ENCODE measurements at regions of chr15 and their contacts with region 1.

Region 1: GRCh38 chr15:57611938-57612337 is 20.2 kb downstream of the MYZAP start:
- DNase-seq: no peak
- H3K4me3 ChIP-seq: no peak overlapping the region
- H3K27ac ChIP-seq: no peak overlapping the region
- H3K4me1 ChIP-seq: no peaks in the 10 kb centered on the region; a peak in 2 of 7 replicates
- H3K27me3 ChIP-seq: peaks cover 0 to 2% (median 0%) of the 10 kb centered on the region in 4 experiments; a peak in 1 of 7 replicates
- CTCF ChIP-seq: peak; percentile 28 to 61 (median 40)
- EP300 ChIP-seq: no peak
- POLR2A ChIP-seq: no peak
- RAD21 ChIP-seq: peak; percentile 53 to 66

Region 2: DNA sequence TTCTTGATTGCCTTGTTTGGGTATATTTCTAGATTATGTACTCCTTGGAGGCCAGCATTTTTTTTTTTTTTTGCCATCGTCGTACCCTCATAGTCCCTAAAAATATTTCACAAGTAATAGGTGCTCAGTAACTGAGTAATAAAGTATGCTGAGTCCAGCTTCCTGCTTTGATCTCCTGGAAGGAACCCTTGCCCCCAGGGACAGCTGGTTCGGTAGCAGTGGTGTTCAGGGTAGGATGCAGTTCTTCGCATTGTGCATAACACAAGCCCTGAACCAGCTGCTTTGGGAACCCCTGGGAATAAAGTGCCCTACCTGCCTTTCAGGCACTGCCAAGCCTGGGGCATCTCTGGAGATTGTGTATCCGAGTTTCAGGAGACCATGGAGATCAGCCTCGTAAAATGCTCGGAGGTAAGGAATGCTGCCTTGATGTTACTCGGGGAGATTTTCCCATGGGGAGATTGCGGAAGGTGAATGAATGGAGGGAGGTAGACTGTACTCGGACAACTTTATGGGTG is 12.6 kb before region 1 on chr15:
- CTCF ChIA-PET with region 1: interaction called, 27 read pairs
- POLR2A ChIA-PET with region 1: no interaction called
- DNase-seq: no peak
- H3K4me3 ChIP-seq: no peak overlapping the region
- H3K27ac ChIP-seq: no peak overlapping the region
- H3K4me1 ChIP-seq: peaks cover 0 to 5% (median 1%) of the 10 kb centered on the region in 4 experiments; a peak in 3 of 7 replicates
- H3K27me3 ChIP-seq: no peaks in the 10 kb centered on the region
- CTCF ChIP-seq: no peak
- EP300 ChIP-seq: no peak
- POLR2A ChIP-seq: no peak
- RAD21 ChIP-seq: no peak

Region 3: DNA sequence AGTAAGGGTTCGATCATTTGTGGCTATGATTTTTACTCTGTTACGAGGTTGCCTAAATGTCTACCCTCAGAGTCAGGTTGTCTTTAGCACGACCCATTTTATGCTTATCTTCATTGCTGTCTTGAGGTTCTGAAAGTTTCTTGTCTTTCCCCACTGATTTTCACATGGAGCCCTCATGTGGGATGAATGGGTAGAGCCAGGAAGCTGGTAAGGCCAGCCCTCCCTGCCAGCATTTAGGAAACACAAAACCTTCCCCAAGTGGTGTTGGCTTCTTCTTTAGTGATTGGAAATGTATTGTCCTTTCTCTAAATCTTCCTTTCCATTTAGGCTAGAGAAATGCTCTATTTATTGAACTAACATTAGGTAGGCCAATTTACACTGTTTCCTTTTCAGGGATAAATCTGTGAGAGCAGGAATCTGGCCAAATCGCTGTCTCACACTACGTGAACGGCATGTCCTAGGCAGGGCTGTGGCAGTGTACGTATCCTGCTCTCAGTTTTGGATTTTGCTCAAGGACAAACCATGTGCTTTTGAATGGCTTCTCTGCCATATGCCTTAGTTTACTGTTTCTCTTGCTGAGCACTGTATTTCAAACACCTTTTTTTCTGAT is 23.5 kb after region 1 on chr15:
- CTCF ChIA-PET with region 1: interaction called, 18 read pairs
- POLR2A ChIA-PET with region 1: no interaction called
- DNase-seq: no peak
- H3K4me3 ChIP-seq: no peak overlapping the region
- H3K27ac ChIP-seq: no peak overlapping the region
- H3K4me1 ChIP-seq: no peaks in the 10 kb centered on the region
- H3K27me3 ChIP-seq: peaks cover 0 to 3% (median 0%) of the 10 kb centered on the region in 4 experiments; a peak in 1 of 7 replicates
- CTCF ChIP-seq: peak; percentile 2 to 41 (median 36); a peak in 3 of 4 replicates
- EP300 ChIP-seq: no peak
- POLR2A ChIP-seq: no peak
- RAD21 ChIP-seq: peak; percentile 40 to 53

Region 4: GRCh38 chr15:57706405-57707209 is 94.7 kb after region 1 on chr15 and contains the start of gene POLR2M:
- CTCF ChIA-PET with region 1: no interaction called
- POLR2A ChIA-PET with region 1: no interaction called
- DNase-seq: peak; percentile 78 to 82
- H3K4me3 ChIP-seq: peak within 1 kb of the TSS; percentile 93 to 99 (median 96)
- H3K27ac ChIP-seq: peak within 1 kb of the TSS; percentile 85
- H3K4me1 ChIP-seq: peaks cover 0 to 3% (median 3%) of the 10 kb centered on the region in 4 experiments; a peak in 3 of 7 replicates
- H3K27me3 ChIP-seq: peaks cover 0 to 13% (median 5%) of the 10 kb centered on the region in 4 experiments; a peak in 6 of 7 replicates
- CTCF ChIP-seq: no peak
- EP300 ChIP-seq: peak in 1 of 2 experiments; percentile 78; a peak in 1 of 3 replicates
- POLR2A ChIP-seq: peak; percentile 80 to 87
- RAD21 ChIP-seq: no peak
- total RNA-seq, gene POLR2M: 55.1 and 61.7 TPM in 2 replicates